IMR-90 (cell line): ENCODE measurements at regions of chr6 and their contacts with region 1.

Region 1: DNA sequence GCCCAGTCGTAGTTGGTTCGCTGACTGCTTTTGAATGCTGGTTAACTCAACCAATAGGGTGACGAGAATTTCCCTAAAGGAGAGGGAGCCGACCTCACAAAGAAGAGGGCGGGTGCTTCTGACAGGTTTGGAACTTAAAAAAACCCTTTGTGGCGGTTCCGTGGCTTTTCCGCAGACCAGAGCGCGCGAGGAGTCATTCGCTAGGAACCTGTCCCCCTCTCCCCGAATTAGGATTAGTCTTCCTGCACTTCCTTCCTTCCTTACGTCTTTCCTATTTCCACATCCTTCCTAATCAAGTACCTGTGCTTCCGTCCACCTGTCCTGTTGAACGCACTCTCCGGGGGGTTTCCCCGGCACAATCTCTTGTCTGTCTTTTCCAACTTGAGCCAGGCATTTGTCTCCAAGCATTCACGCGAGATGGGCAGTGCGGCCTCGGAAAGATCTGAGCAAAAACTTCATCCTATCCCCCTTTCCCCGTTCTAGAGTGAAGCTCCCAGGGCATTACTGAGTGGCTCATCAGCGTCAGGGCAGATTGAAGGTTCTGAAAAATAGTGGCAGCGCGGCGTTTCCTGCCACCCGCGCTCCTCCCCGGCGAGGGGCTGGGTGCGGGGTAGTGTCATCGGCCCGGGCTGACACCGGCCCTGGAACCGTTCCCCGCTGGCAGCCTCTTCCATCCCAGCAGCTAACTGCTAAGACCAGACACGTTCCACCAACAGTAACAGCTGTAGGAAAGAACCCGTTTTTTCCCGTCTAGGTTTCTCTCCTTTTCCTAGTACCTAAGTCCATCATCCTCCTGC is 1.5 kb upstream of the STXBP5 start:
- DNase-seq: peak; percentile 98
- ATAC-seq: peak; percentile 76
- H3K4me3 ChIP-seq: peak overlapping the region; percentile 60
- H3K27ac ChIP-seq: peak overlapping the region; percentile 68
- H3K4me1 ChIP-seq: no peaks in the 10 kb centered on the region
- H3K27me3 ChIP-seq: no peaks in the 10 kb centered on the region
- CTCF ChIP-seq: no peak
- POLR2A ChIP-seq: no peak; the same call in 1 of the 2 replicates
- RAD21 ChIP-seq: no peak

Region 2: GRCh38 chr6:146913842-146914488 is 288.7 kb before region 1 on chr6:
- CTCF ChIA-PET with region 1: no interaction called
- POLR2A ChIA-PET with region 1: interaction called, 5 read pairs
- dilution Hi-C with region 1: no loop called
- in situ Hi-C with region 1: loop called (anchors 25 kb)
- intact Hi-C with region 1: loop called (anchors 1 kb)
- DNase-seq: peak; percentile 99
- ATAC-seq: peak; percentile 88
- H3K4me3 ChIP-seq: peak overlapping the region; percentile 28; the same call in 1 of the 2 replicates
- H3K27ac ChIP-seq: peak overlapping the region; percentile 97
- H3K4me1 ChIP-seq: peaks cover 16% of the 10 kb centered on the region
- H3K27me3 ChIP-seq: no peaks in the 10 kb centered on the region
- CTCF ChIP-seq: 0 out of 2 replicates have a peak, but pooled peaks have one; percentile 12
- POLR2A ChIP-seq: peak; percentile 81
- RAD21 ChIP-seq: peak; percentile 50

Region 3: GRCh38 chr6:147040121-147040910 is 162.4 kb before region 1 on chr6:
- CTCF ChIA-PET with region 1: no interaction called
- POLR2A ChIA-PET with region 1: interaction called, 3 read pairs
- dilution Hi-C with region 1: no loop called
- in situ Hi-C with region 1: no loop called
- intact Hi-C with region 1: loop called (anchors 2 kb)
- DNase-seq: peak; percentile 55
- ATAC-seq: peak; percentile 75
- H3K4me3 ChIP-seq: no peak overlapping the region
- H3K27ac ChIP-seq: peak overlapping the region; percentile 99; the same call in 1 of the 2 replicates
- H3K4me1 ChIP-seq: peaks cover 5% of the 10 kb centered on the region
- H3K27me3 ChIP-seq: no peaks in the 10 kb centered on the region
- CTCF ChIP-seq: no peak
- POLR2A ChIP-seq: no peak
- RAD21 ChIP-seq: no peak

Region 4: DNA sequence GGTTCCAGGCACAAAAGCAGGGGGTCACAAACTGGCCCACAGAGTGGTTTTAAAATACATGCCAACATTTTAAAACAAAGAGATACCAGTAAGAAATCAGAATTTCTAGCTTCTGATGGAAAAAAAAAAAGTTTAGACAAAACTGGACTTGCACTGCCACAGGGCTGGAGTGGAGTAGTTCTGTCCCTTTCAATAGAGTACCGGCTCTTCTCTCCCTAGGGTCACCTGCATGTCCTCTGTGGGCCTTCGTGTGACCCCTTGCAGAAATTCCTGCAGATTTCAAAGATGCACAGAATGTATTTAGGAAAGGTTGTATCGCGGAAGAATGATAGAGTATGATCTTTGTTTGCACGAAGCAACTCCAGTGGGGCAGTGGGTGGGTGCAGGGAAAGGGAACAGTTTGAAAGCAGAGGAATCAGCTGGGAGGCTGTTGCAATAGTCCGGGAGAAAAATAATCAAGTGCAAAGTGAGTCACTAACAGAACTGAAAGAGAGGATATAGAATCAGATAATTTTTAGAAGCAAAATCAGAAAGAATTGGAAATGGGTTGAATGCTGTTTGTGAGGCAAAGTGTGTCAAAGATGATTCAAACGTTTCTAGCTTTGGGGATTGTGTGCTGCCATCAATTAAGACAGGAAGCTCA is 95.8 kb before region 1 on chr6:
- CTCF ChIA-PET with region 1: no interaction called
- POLR2A ChIA-PET with region 1: no interaction called
- dilution Hi-C with region 1: no loop called
- in situ Hi-C with region 1: no loop called
- intact Hi-C with region 1: loop called (anchors 5 kb)
- DNase-seq: peak; percentile 83
- ATAC-seq: peak; percentile 95
- H3K4me3 ChIP-seq: peak overlapping the region; percentile 25; the same call in 1 of the 2 replicates
- H3K27ac ChIP-seq: peak overlapping the region; percentile 95
- H3K4me1 ChIP-seq: peaks cover 1% of the 10 kb centered on the region; the same call in 1 of the 2 replicates
- H3K27me3 ChIP-seq: no peaks in the 10 kb centered on the region
- CTCF ChIP-seq: no peak
- POLR2A ChIP-seq: no peak
- RAD21 ChIP-seq: no peak; the same call in 1 of the 2 replicates

Region 5: GRCh38 chr6:147238164-147238563 is 35.5 kb after region 1 on chr6:
- CTCF ChIA-PET with region 1: no interaction called
- POLR2A ChIA-PET with region 1: no interaction called
- dilution Hi-C with region 1: no loop called
- in situ Hi-C with region 1: no loop called
- intact Hi-C with region 1: no loop called
- DNase-seq: no peak
- ATAC-seq: no peak
- H3K4me3 ChIP-seq: no peak overlapping the region
- H3K27ac ChIP-seq: peak overlapping the region; percentile 1; the same call in 1 of the 2 replicates
- H3K4me1 ChIP-seq: 0 out of 2 replicates have a peak, but pooled peaks cover 2% of the 10 kb centered on the region
- H3K27me3 ChIP-seq: no peaks in the 10 kb centered on the region
- CTCF ChIP-seq: no peak
- POLR2A ChIP-seq: no peak
- RAD21 ChIP-seq: no peak